ENCODE measurements at regions of chr7 and their contacts with region 1.

Region 1: DNA sequence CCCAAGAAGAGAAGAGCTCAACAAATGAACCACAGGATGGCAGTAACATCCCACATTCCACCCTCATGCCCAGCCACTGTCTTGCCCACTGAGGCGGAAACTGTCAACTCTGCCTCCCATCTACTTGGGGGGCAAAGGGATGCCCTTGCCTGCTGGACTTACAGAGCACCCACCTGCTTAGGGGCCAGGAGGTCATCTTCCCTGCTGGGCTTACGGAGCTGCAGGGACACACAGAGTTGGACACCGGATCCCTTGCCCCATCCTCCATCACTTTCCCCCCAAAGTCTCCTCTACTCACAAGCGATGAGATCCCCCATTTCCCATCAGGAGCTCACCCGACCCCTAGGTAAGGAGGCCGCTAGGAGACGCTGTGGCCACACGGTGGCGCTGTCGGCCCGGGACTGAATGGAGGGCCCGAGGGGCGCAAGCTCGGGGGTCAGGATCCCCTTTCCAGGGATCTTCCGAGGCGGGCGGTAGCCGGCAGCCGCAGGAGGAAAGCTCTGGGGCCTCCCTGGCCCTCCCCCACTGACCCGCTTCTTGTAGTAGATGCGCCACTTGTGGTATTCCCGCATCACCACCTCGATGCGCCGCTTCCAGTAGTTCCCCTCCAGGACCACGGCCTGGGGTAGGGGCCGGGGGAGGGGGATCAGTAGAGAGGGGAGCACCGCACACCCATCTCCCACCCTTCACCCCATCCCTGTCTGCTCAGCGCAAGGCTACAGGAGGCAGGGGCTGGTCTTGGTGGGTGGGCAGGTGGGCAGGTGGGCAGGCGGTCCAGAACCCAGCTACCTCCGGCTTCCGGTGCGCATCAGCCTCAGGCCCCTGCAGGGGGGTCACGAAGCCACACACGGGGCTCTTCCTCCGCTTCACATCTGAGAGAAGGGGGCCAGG is 17.3 kb downstream of the MLXIPL start:
- DNase-seq: peak in 5 of 6 donors; percentile 27 to 88 (median 64)
- ATAC-seq: peak; percentile 66 to 83 (median 72)
- H3K4me3 ChIP-seq: no peak overlapping the region
- H3K27ac ChIP-seq: no peak overlapping the region
- H3K4me1 ChIP-seq: no peaks in the 10 kb centered on the region
- H3K27me3 ChIP-seq: no peaks in the 10 kb centered on the region
- CTCF ChIP-seq: peak; percentile 83 to 95 (median 88)

Region 2: DNA sequence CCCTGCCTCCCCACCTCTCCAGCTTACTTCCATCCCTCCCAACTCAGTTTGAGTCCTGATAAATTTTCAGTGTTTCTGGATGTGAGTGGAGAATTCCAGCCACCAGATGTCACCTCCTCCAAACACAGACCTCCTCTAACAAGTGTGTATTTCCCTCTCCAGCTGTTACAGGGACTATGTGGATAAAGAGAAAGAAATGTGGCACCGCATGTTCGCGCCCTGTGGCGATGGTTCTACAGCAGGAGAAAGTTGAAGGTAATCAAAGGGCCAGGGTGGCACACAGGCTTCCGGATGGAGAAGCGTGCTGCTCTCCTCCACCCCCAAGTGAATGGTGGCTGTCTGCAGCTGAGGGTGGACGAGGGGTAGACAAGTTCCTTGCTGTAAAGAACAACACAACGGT is 264.4 kb before region 1 on chr7:
- intact Hi-C with region 1: no loop called
- DNase-seq: peak in 3 of 6 donors; percentile 33 to 52 (median 34)
- ATAC-seq: peak; percentile 87 to 98 (median 92)
- H3K4me3 ChIP-seq: peak overlapping the region in 1 of 4 donors; percentile 7
- H3K27ac ChIP-seq: no peak overlapping the region
- H3K4me1 ChIP-seq: no peaks in the 10 kb centered on the region
- H3K27me3 ChIP-seq: no peaks in the 10 kb centered on the region
- CTCF ChIP-seq: peak in 3 of 4 donors; percentile 18 to 43 (median 25)

Region 3: DNA sequence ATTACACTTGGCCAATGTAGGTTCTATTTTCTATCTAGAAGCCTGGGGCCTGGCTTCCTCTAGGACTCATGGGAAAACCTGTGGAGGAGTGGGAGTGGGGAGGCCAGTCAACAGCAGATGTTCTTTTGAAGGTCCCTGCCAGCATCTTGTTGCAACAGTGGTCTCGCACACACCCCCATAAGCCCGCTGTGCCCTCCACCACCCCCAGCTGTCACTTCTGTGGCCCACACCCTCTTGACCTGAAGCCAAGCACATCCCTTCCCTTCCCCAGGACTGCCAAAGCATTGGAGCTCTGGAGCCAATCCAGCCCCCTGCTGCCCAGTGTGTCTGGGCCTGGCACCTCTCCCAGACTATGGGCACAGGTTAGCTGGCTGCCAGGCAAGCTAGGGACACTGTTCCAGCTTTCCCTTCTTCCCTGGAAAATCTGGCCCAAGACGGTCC is 114.4 kb after region 1 on chr7:
- intact Hi-C with region 1: loop called (anchors 5 to 10 kb)
- DNase-seq: peak; percentile 82 to 94 (median 86)
- ATAC-seq: peak; percentile 73 to 81 (median 76)
- H3K4me3 ChIP-seq: no peak overlapping the region
- H3K27ac ChIP-seq: peak overlapping the region in 2 of 4 donors; percentile 22 to 28
- H3K4me1 ChIP-seq: peaks cover 0 to 11% (median 4%) of the 10 kb centered on the region in 3 donors
- H3K27me3 ChIP-seq: no peaks in the 10 kb centered on the region
- CTCF ChIP-seq: no peak

Region 4: DNA sequence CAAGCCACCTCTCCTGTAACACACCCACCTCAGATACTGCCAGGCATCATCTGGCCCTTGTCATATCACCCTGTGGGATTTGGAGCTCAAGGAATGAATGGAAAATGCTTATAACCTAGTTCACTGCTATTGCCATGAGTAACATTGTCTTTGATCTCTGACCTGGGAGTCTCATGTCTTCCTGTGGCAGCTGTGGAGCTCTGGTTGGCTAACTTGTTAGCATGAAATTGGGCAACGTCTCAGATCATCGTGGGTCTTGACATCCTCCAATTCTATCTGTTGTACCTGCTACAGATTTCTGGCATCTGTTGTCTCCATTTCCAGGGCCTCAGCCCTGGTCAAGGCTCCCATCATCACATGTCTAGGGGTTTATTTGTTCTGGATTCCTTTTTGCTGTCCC is 251.8 kb after region 1 on chr7:
- intact Hi-C with region 1: loop called in 1 of 3 experiments (anchors 5 kb)
- DNase-seq: no peak
- ATAC-seq: no peak
- H3K4me3 ChIP-seq: no peak overlapping the region
- H3K27ac ChIP-seq: no peak overlapping the region
- H3K4me1 ChIP-seq: peaks cover 0 to 3% (median 0%) of the 10 kb centered on the region in 3 donors
- H3K27me3 ChIP-seq: no peaks in the 10 kb centered on the region
- CTCF ChIP-seq: no peak